CD4-positive, alpha-beta T cell (primary cell): ENCODE measurements at regions of chr4 and their contacts with region 1.

Region 1: DNA sequence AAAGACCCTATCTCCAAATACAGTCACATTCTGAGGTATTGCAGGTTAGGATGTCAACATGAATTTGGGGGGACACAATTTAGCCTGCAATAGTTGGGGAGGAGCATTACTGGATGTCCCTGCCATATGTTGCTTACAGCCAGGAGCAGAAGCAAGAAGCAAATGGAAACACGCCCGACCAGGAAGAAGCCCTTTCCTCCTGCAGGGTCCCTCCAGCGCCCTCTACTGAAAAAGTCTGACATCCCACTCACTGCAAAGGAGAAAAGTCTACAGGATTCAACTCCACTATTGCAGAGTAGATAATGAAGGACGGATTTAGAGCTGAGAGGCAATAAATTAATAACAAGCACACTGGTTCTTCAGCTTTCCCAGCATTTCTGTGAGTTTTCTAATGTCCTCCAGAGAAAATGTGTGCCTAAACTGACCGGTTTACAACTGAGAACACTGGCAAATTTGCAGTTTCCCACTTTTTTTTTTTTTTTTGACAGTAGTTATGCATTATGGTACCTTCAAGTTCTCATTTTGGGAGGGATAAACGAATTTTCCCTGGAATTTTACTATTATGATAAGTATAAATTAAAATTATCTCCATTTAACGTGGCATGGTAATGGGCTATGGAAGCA is 31.7 kb downstream of the COQ2 start:
- DNase-seq: peak; percentile 52 to 88 (median 66)
- ATAC-seq: peak; percentile 98
- H3K4me3 ChIP-seq: no peak overlapping the region
- H3K4me3 Mint-ChIP-seq: no peak overlapping the region
- H3K27ac ChIP-seq: no peak overlapping the region
- H3K27ac Mint-ChIP-seq: peak overlapping the region; percentile 53
- H3K4me1 ChIP-seq: peaks cover 13% of the 10 kb centered on the region
- H3K4me1 Mint-ChIP-seq: peaks cover 30% of the 10 kb centered on the region
- H3K27me3 ChIP-seq: no peaks in the 10 kb centered on the region
- H3K27me3 Mint-ChIP-seq: no peaks in the 10 kb centered on the region
- CTCF ChIP-seq: peak; percentile 79

Region 2: GRCh38 chr4:82823062-82823461 is 429.8 kb before region 1 on chr4:
- CTCF ChIA-PET with region 1: no interaction called
- POLR2A ChIA-PET with region 1: no interaction called
- intact Hi-C with region 1: no loop called
- DNase-seq: no peak
- ATAC-seq: no peak
- H3K4me3 ChIP-seq: no peak overlapping the region
- H3K4me3 Mint-ChIP-seq: no peak overlapping the region
- H3K27ac ChIP-seq: no peak overlapping the region
- H3K27ac Mint-ChIP-seq: no peak overlapping the region
- H3K4me1 ChIP-seq: no peaks in the 10 kb centered on the region
- H3K4me1 Mint-ChIP-seq: no peaks in the 10 kb centered on the region
- H3K27me3 ChIP-seq: no peaks in the 10 kb centered on the region
- H3K27me3 Mint-ChIP-seq: no peaks in the 10 kb centered on the region
- CTCF ChIP-seq: no peak

Region 3: DNA sequence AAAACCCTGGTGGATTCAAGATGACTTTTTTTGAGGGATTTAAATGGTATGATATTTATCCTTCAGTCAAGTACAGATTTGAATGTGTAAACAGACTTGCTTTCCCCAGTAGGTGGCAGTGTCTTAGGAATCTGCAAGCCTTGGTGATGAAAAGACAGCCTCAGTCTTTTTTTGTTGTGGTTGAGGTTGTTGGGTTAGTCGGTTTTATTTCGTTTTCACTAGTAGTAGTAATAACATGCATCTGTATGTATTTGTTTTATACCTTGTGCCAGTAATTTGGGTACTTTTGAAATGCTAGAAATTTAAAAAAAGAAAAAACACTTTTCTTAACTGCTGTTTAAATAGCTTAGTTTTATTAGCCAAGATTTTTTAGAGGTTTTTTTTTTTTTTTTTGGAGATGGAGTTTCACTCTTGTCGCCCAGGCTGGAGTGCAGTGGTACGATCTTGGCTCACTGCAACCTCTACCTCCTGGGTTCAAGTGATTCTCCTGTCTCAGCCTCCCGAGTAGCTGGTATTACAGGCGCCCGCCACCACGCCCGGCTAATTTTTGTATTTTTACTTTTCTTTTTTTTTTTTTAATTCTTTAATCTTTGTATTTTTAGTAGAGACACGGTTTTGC is 178.7 kb before region 1 on chr4:
- CTCF ChIA-PET with region 1: interaction called, 4 read pairs
- POLR2A ChIA-PET with region 1: interaction called, 4 read pairs
- intact Hi-C with region 1: loop called (anchors 1 kb)
- DNase-seq: peak in 9 of 14 experiments; percentile 26 to 93 (median 59)
- ATAC-seq: peak; percentile 95
- H3K4me3 ChIP-seq: peak overlapping the region; percentile 13
- H3K4me3 Mint-ChIP-seq: peak overlapping the region; percentile 68
- H3K27ac ChIP-seq: no peak overlapping the region
- H3K27ac Mint-ChIP-seq: peak overlapping the region; percentile 69
- H3K4me1 ChIP-seq: peaks cover 8% of the 10 kb centered on the region
- H3K4me1 Mint-ChIP-seq: peaks cover 13% of the 10 kb centered on the region
- H3K27me3 ChIP-seq: no peaks in the 10 kb centered on the region
- H3K27me3 Mint-ChIP-seq: no peaks in the 10 kb centered on the region
- CTCF ChIP-seq: peak; percentile 77

Region 4: GRCh38 chr4:83217721-83218522 is 35.0 kb before region 1 on chr4:
- CTCF ChIA-PET with region 1: interaction called, 6 read pairs
- POLR2A ChIA-PET with region 1: interaction called, 37 read pairs
- intact Hi-C with region 1: loop called (anchors 1 to 5 kb)
- DNase-seq: peak; percentile 35 to 94 (median 54)
- ATAC-seq: peak; percentile 89
- H3K4me3 ChIP-seq: peak overlapping the region; percentile 17
- H3K4me3 Mint-ChIP-seq: peak overlapping the region; percentile 74
- H3K27ac ChIP-seq: peak overlapping the region; percentile 74 to 76
- H3K27ac Mint-ChIP-seq: peak overlapping the region; percentile 89
- H3K4me1 ChIP-seq: peaks cover 69% of the 10 kb centered on the region
- H3K4me1 Mint-ChIP-seq: peaks cover 71% of the 10 kb centered on the region
- H3K27me3 ChIP-seq: no peaks in the 10 kb centered on the region
- H3K27me3 Mint-ChIP-seq: no peaks in the 10 kb centered on the region
- CTCF ChIP-seq: no peak

Region 5: DNA sequence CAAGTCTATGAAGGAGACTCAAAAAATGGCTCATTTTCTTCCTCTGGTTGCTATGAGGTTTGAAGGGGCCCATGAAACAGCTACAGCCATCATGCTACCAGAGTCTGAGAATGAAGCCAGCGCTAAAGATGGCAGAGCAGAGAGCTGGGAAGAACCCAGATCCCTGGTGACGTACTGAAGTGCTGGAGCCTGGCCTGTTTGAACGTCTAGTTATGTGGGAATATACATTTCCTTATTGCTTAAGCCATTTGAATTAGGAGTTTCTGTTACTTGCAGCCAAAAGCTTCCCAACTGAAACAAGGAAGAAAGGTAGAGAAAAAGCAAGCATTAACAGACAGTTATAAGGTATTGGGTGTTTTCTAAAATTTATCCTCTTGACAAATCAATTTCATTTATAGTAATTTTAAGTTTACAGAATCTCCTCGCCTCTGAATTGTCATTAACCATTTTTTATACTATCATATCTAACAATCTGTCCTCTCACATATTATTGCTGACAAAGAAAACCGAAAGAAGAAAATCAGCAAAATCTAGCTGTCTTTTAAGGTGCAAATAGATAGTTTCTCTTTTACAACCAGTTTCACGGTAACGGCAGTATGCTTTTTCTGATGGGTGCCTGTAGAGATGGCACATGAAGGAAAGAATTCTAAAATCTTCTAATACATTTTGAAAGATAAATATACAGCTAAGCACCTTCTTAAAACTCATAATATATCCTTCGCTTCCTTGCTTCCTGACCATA is 40.6 kb after region 1 on chr4:
- CTCF ChIA-PET with region 1: no interaction called
- POLR2A ChIA-PET with region 1: no interaction called
- intact Hi-C with region 1: no loop called
- DNase-seq: no peak
- ATAC-seq: no peak
- H3K4me3 ChIP-seq: no peak overlapping the region
- H3K4me3 Mint-ChIP-seq: no peak overlapping the region
- H3K27ac ChIP-seq: peak overlapping the region in 1 of 2 donors; percentile 32
- H3K27ac Mint-ChIP-seq: no peak overlapping the region
- H3K4me1 ChIP-seq: peaks cover 5% of the 10 kb centered on the region
- H3K4me1 Mint-ChIP-seq: peaks cover 11% of the 10 kb centered on the region
- H3K27me3 ChIP-seq: no peaks in the 10 kb centered on the region
- H3K27me3 Mint-ChIP-seq: no peaks in the 10 kb centered on the region
- CTCF ChIP-seq: no peak

Region 6: GRCh38 chr4:83334425-83335241 is 81.7 kb after region 1 on chr4 and contains the start of gene HPSE:
- CTCF ChIA-PET with region 1: no interaction called
- POLR2A ChIA-PET with region 1: no interaction called
- intact Hi-C with region 1: no loop called
- DNase-seq: peak; percentile 53 to 85 (median 68)
- ATAC-seq: peak; percentile 95
- H3K4me3 ChIP-seq: peak within 1 kb of the TSS; percentile 86
- H3K4me3 Mint-ChIP-seq: peak within 1 kb of the TSS; percentile 94
- H3K27ac ChIP-seq: peak within 1 kb of the TSS; percentile 19 to 45
- H3K27ac Mint-ChIP-seq: peak within 1 kb of the TSS; percentile 73
- H3K4me1 ChIP-seq: peaks cover 34% of the 10 kb centered on the region
- H3K4me1 Mint-ChIP-seq: peaks cover 33% of the 10 kb centered on the region
- H3K27me3 ChIP-seq: no peaks in the 10 kb centered on the region
- H3K27me3 Mint-ChIP-seq: no peaks in the 10 kb centered on the region
- CTCF ChIP-seq: no peak
- total RNA-seq, gene HPSE: 1.5 to 2.1 TPM

Region 7: DNA sequence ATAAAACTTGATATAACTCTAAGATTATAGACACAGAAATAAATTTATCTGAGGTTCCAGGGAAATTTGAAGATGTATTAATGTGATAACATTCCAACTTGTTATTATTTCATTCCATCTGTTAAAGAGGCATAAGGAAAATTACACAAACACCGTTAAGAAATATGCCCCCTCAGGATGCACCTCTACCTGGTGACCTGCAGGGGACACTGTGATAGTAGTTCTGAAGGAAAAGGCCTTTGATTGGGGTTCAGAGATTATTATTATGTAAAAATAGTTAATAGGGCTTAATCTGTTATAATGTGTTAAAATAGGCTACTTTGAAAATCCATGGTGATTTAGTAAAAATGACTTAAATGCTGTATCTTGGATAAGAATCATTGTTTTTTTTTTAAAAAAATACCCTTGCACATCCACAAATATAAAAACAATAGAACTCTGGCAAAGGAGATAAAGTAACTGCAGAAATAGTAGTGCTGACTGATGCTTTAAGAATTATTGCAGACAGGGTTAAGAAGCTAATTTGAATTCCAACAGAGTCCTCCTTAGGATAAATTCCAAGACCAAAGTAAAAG is 238.1 kb after region 1 on chr4:
- CTCF ChIA-PET with region 1: no interaction called
- POLR2A ChIA-PET with region 1: no interaction called
- intact Hi-C with region 1: no loop called
- DNase-seq: peak in 4 of 14 experiments; percentile 40 to 68 (median 53)
- ATAC-seq: peak; percentile 83
- H3K4me3 ChIP-seq: no peak overlapping the region
- H3K4me3 Mint-ChIP-seq: no peak overlapping the region
- H3K27ac ChIP-seq: no peak overlapping the region
- H3K27ac Mint-ChIP-seq: no peak overlapping the region
- H3K4me1 ChIP-seq: no peaks in the 10 kb centered on the region
- H3K4me1 Mint-ChIP-seq: no peaks in the 10 kb centered on the region
- H3K27me3 ChIP-seq: no peaks in the 10 kb centered on the region
- H3K27me3 Mint-ChIP-seq: no peaks in the 10 kb centered on the region
- CTCF ChIP-seq: peak; percentile 85